ENCODE measurements at regions of chr5 and their contacts with region 1.

Region 1: GRCh38 chr5:109374625-109375024 is 35.1 kb downstream of the PJA2 start:
- DNase-seq: peak in 1 of 5 donors; percentile 2
- H3K4me3 ChIP-seq: no peak overlapping the region
- H3K4me3 Mint-ChIP-seq: no peak overlapping the region
- H3K27ac ChIP-seq: no peak overlapping the region
- H3K27ac Mint-ChIP-seq: peak overlapping the region in 1 of 7 donors; percentile 13
- H3K4me1 ChIP-seq: peaks cover 15% of the 10 kb centered on the region
- H3K4me1 Mint-ChIP-seq: peaks cover 38 to 69% (median 55%) of the 10 kb centered on the region in 4 donors
- H3K27me3 ChIP-seq: no peaks in the 10 kb centered on the region
- H3K27me3 Mint-ChIP-seq: no peaks in the 10 kb centered on the region

Region 2: DNA sequence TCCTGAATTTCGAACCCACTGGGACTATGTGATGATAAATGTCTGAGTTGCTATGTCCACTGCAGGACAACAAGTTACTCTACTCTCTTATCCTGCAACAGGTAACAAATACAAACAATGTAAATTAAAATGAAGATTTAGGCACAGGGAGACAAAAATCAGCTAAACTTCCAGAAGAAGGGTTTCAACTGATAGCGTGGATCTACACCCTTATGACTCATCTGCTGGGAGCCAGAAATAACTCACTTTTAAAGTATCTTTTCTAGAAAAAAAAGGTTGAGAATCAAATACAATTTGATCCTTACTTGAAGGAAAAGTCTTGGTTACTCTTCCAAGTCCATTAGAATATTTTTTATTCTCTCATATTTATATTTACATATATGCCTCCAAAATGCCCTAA is 13.8 kb after region 1 on chr5:
- CTCF ChIA-PET with region 1: no interaction called
- POLR2A ChIA-PET with region 1: no interaction called
- intact Hi-C with region 1: loop called (anchors 2 kb)
- DNase-seq: no peak
- H3K4me3 ChIP-seq: no peak overlapping the region
- H3K4me3 Mint-ChIP-seq: peak overlapping the region in 1 of 8 donors; percentile 22
- H3K27ac ChIP-seq: no peak overlapping the region
- H3K27ac Mint-ChIP-seq: peak overlapping the region in 4 of 7 donors; percentile 14 to 72 (median 36)
- H3K4me1 ChIP-seq: peaks cover 82% of the 10 kb centered on the region
- H3K4me1 Mint-ChIP-seq: peaks cover 50 to 90% (median 73%) of the 10 kb centered on the region in 4 donors
- H3K27me3 ChIP-seq: no peaks in the 10 kb centered on the region
- H3K27me3 Mint-ChIP-seq: no peaks in the 10 kb centered on the region

Measured in CD4-positive, alpha-beta memory T cell (primary cell).